ENCODE measurements at regions of chr7 and their contacts with region 1.

Region 1: GRCh38 chr7:101633511-101633910 is 4.4 kb upstream of the MYL10 start:
- DNase-seq: peak; percentile 67 to 96
- ATAC-seq: peak; percentile 96 to 97
- H3K4me3 ChIP-seq: no peak overlapping the region
- H3K27ac ChIP-seq: peak overlapping the region in 3 of 4 donors; percentile 38 to 85 (median 64)
- H3K4me1 ChIP-seq: peaks cover 7 to 34% of the 10 kb centered on the region in 2 donors
- H3K27me3 ChIP-seq: no peaks in the 10 kb centered on the region
- CTCF ChIP-seq: no peak
- POLR2A ChIP-seq: no peak

Region 2: GRCh38 chr7:101671371-101672356 is 38.2 kb after region 1 on chr7:
- in situ Hi-C with region 1: no loop called
- intact Hi-C with region 1: loop called (anchors 1 kb)
- DNase-seq: peak in 1 of 2 donors; percentile 51
- ATAC-seq: peak; percentile 37 to 85
- H3K4me3 ChIP-seq: peak overlapping the region in 1 of 4 donors; percentile 20
- H3K27ac ChIP-seq: peak overlapping the region; percentile 37 to 86 (median 64)
- H3K4me1 ChIP-seq: peaks cover 13 to 14% of the 10 kb centered on the region in 2 donors
- H3K27me3 ChIP-seq: no peaks in the 10 kb centered on the region
- CTCF ChIP-seq: no peak
- POLR2A ChIP-seq: no peak

Measured in gastrocnemius medialis (tissue), 4 donors.